Heart right ventricle (tissue), 16 donors: ENCODE measurements at regions of chr6 and their contacts with region 1.

Region 1: GRCh38 chr6:41625442-41625841 is 12.8 kb upstream of the MDFI start:
- DNase-seq: peak; percentile 43 to 65
- ATAC-seq: peak; percentile 61 to 93 (median 82)
- H3K4me3 ChIP-seq: no peak overlapping the region
- H3K27ac ChIP-seq: no peak overlapping the region
- H3K4me1 ChIP-seq: peaks cover 3 to 21% (median 10%) of the 10 kb centered on the region in 9 donors
- H3K27me3 ChIP-seq: peaks cover 0 to 4% (median 0%) of the 10 kb centered on the region in 7 donors
- CTCF ChIP-seq: no peak

Region 2: GRCh38 chr6:41667195-41667594 is 41.8 kb after region 1 on chr6:
- intact Hi-C with region 1: loop called in 1 of 10 experiments (anchors 5 kb)
- DNase-seq: no peak
- ATAC-seq: no peak
- H3K4me3 ChIP-seq: no peak overlapping the region
- H3K27ac ChIP-seq: no peak overlapping the region
- H3K4me1 ChIP-seq: no peaks in the 10 kb centered on the region
- H3K27me3 ChIP-seq: peaks cover 0 to 19% (median 0%) of the 10 kb centered on the region in 7 donors
- CTCF ChIP-seq: no peak